Left lung (tissue), 14 donors: ENCODE measurements at regions of chr13 and their contacts with region 1.

Region 1: DNA sequence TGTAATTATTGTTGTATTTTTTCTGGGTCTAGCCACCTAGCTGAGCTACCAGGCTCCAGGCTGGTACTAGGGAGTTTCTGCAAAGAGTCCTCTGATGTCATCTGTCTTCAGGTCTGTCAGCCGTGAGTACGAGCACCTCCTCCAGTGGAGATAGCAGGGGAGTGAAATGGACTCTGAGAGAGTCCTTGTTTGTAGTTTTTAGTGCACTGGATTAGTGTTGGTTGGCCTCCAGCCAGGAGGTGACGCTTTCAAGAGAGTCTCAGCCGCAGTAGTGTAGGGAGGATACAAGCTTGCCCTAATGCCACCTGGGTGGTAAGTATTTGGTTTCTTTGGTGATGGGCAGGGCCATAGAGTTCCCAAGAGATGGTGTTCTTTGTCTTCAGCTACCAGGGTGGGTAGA is 384.8 kb downstream of the SLC7A1 start:
- DNase-seq: peak in 1 of 4 donors; percentile 5
- ATAC-seq: no peak
- H3K4me3 ChIP-seq: no peak overlapping the region
- H3K27ac ChIP-seq: no peak overlapping the region
- H3K4me1 ChIP-seq: no peaks in the 10 kb centered on the region
- H3K27me3 ChIP-seq: no peaks in the 10 kb centered on the region
- CTCF ChIP-seq: no peak

Region 2: DNA sequence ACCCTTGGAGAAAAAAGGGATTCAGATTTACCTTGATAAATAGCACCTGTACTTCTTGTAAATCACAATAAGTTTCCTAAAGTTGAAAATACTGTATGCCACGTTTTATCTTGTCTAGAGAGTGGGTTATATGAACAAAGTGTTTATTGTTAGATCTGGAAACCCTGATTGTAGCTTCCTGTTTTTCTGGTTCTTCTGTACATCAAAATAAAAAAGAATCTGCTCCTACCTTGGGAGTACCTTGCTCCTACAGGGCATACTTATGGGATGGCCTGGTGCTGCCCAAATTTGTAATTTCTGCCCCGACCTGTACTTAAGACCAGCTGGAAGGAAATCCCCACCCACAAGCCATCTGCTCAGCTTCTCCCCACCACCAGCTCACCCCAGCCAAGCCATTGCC is 143.7 kb after region 1 on chr13:
- intact Hi-C with region 1: loop called in 1 of 2 experiments (anchors 5 kb)
- DNase-seq: no peak
- ATAC-seq: no peak
- H3K4me3 ChIP-seq: no peak overlapping the region
- H3K27ac ChIP-seq: no peak overlapping the region
- H3K4me1 ChIP-seq: no peaks in the 10 kb centered on the region
- H3K27me3 ChIP-seq: peaks cover 0 to 10% of the 10 kb centered on the region in 2 donors
- CTCF ChIP-seq: no peak